ENCODE measurements at regions of chr17 and their contacts with region 1.

Region 1: DNA sequence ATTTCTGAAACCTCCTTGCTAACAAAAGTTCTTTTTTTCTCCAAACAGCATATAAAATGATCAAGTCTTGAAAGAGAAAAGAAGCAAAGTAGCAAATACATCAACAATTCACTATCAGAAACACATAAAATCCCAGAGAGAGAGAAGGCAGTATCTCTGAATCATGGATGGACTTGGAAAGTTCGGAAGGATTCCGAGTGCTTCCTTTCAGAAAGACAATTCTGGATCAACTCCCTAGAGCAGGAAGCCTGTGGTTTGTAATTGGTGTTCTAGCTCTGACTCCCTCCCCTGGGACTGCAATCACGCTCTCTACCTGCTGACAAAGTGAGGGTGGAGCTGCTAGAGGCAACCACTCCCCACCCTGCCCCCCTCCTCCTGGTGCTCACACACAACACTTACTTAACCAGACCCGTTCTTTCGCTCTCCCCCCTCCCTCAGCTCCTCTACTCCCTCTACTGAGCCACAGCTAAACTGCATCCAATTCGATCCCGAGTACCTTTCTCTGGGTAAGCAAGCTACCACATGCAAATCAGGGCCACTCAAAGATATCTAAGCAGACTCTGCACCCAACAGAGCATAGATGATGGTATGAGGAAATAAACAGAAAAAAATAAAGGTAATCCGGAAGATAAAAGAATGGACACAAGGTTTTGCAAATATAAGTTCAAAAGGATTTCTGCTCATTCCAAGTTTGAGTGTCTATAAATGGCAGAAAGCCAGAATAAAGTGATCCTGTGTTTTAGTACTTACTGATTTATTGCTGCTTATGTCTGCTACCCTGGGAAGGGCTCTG is at the start of gene RNF43:
- DNase-seq: peak; percentile 75
- ATAC-seq: peak; percentile 98
- H3K4me3 ChIP-seq: peak within 1 kb of the TSS; percentile 44 to 61
- H3K27ac ChIP-seq: peak within 1 kb of the TSS; percentile 66
- H3K4me1 ChIP-seq: peaks cover 5% of the 10 kb centered on the region; the same call in 1 of the 2 replicates
- H3K27me3 ChIP-seq: peaks cover 8% of the 10 kb centered on the region; the same call in 1 of the 2 replicates
- CTCF ChIP-seq: peak; percentile 82
- total RNA-seq, gene RNF43: 4.7 TPM

Region 2: DNA sequence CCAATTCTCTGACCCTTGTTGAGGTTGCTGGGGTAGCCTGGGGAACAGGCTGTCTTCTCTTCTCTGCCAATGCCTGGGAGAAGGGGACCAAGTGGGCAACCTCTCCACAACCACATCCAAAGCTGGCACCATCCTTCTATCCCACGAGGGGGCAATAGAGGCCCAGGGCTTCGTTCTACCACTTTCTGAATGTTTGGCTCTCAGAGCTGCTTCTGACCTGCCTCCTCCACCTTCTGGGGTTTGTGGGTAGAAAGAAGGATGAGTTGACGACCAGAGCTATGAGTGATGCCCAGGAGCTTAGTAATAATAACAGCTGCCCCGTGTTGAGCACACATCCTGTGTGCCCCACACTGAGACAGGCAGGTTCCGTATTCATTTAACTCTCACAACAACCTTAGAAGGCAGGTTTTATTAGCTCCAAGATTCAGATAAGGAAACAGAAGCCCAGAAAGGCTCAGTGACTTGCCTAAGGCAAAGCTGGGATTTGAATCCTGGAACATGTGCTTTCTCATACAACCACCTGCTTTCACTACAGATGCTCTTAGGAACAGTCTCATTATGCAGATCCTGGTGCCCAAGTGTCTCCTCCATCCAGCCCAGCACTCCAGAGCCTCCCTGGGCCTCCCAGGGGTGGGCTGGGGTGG is 100.0 kb before region 1 on chr17:
- CTCF ChIA-PET with region 1: interaction called, 19 read pairs
- POLR2A ChIA-PET with region 1: no interaction called
- in situ Hi-C with region 1: no loop called
- intact Hi-C with region 1: no loop called
- DNase-seq: peak; percentile 45
- ATAC-seq: peak; percentile 93
- H3K4me3 ChIP-seq: no peak overlapping the region
- H3K27ac ChIP-seq: no peak overlapping the region
- H3K4me1 ChIP-seq: no peaks in the 10 kb centered on the region
- H3K27me3 ChIP-seq: no peaks in the 10 kb centered on the region
- CTCF ChIP-seq: peak; percentile 86

Region 3: DNA sequence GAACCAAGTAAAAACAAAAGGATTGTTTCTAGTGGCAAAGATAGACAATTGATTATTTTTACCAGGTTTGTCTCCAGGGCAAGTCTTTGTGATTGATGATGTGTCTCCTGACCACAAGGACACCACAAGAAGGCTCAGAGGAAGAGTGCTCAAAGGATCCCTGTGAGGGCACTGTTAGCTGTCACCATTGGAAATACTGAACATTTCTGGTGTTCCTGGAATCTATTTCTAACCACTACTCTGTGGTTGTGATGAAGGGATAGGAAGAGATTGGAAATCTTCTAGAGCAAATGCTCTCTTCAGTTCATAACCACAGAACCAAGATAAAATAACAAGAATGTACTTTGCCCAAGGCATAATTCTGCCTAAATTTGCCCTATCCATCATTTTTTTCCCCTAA is 15.4 kb before region 1 on chr17:
- CTCF ChIA-PET with region 1: interaction called, 13 read pairs
- POLR2A ChIA-PET with region 1: no interaction called
- in situ Hi-C with region 1: no loop called
- intact Hi-C with region 1: no loop called
- DNase-seq: no peak
- ATAC-seq: no peak
- H3K4me3 ChIP-seq: no peak overlapping the region
- H3K27ac ChIP-seq: no peak overlapping the region
- H3K4me1 ChIP-seq: no peaks in the 10 kb centered on the region; the same call in 1 of the 2 replicates
- H3K27me3 ChIP-seq: no peaks in the 10 kb centered on the region
- CTCF ChIP-seq: no peak